ENCODE measurements at regions of chr2 and their contacts with region 1.

Region 1: GRCh38 chr2:105369747-105370690 is 28.8 kb downstream of the FHL2 start:
- DNase-seq: peak; percentile 55 to 74 (median 74)
- H3K4me3 ChIP-seq: no peak overlapping the region
- H3K4me3 Mint-ChIP-seq: no peak overlapping the region
- H3K27ac ChIP-seq: no peak overlapping the region
- H3K27ac Mint-ChIP-seq: no peak overlapping the region
- H3K4me1 ChIP-seq: peaks cover 0 to 6% of the 10 kb centered on the region in 2 donors
- H3K4me1 Mint-ChIP-seq: peaks cover 4% of the 10 kb centered on the region
- H3K27me3 ChIP-seq: no peaks in the 10 kb centered on the region
- H3K27me3 Mint-ChIP-seq: peaks cover 5 to 10% (median 7%) of the 10 kb centered on the region in 3 donors
- CTCF ChIP-seq: peak; percentile 88

Region 2: GRCh38 chr2:105102963-105103421 is 267.0 kb before region 1 on chr2:
- intact Hi-C with region 1: no loop called
- DNase-seq: no peak
- H3K4me3 ChIP-seq: no peak overlapping the region
- H3K4me3 Mint-ChIP-seq: no peak overlapping the region
- H3K27ac ChIP-seq: no peak overlapping the region
- H3K27ac Mint-ChIP-seq: peak overlapping the region in 1 of 7 donors; percentile 17
- H3K4me1 ChIP-seq: peaks cover 14 to 22% of the 10 kb centered on the region in 2 donors
- H3K4me1 Mint-ChIP-seq: peaks cover 27% of the 10 kb centered on the region
- H3K27me3 ChIP-seq: no peaks in the 10 kb centered on the region
- H3K27me3 Mint-ChIP-seq: peaks cover 0 to 2% (median 0%) of the 10 kb centered on the region in 3 donors
- CTCF ChIP-seq: no peak

Region 3: GRCh38 chr2:105261061-105261460 is 109.0 kb before region 1 on chr2:
- intact Hi-C with region 1: no loop called
- DNase-seq: no peak
- H3K4me3 ChIP-seq: no peak overlapping the region
- H3K4me3 Mint-ChIP-seq: no peak overlapping the region
- H3K27ac ChIP-seq: no peak overlapping the region
- H3K27ac Mint-ChIP-seq: peak overlapping the region in 1 of 7 donors; percentile 13
- H3K4me1 ChIP-seq: peaks cover 0 to 7% of the 10 kb centered on the region in 2 donors
- H3K4me1 Mint-ChIP-seq: peaks cover 15% of the 10 kb centered on the region
- H3K27me3 ChIP-seq: no peaks in the 10 kb centered on the region
- H3K27me3 Mint-ChIP-seq: peaks cover 0 to 1% (median 0%) of the 10 kb centered on the region in 3 donors
- CTCF ChIP-seq: no peak

Region 4: GRCh38 chr2:105521205-105521604 is 151.2 kb after region 1 on chr2:
- intact Hi-C with region 1: loop called (anchors 2 to 10 kb)
- DNase-seq: no peak
- H3K4me3 ChIP-seq: no peak overlapping the region
- H3K4me3 Mint-ChIP-seq: no peak overlapping the region
- H3K27ac ChIP-seq: no peak overlapping the region
- H3K27ac Mint-ChIP-seq: no peak overlapping the region
- H3K4me1 ChIP-seq: no peaks in the 10 kb centered on the region
- H3K4me1 Mint-ChIP-seq: peaks cover 7% of the 10 kb centered on the region
- H3K27me3 ChIP-seq: no peaks in the 10 kb centered on the region
- H3K27me3 Mint-ChIP-seq: peaks cover 0 to 2% (median 0%) of the 10 kb centered on the region in 3 donors
- CTCF ChIP-seq: peak; percentile 63

Region 5: DNA sequence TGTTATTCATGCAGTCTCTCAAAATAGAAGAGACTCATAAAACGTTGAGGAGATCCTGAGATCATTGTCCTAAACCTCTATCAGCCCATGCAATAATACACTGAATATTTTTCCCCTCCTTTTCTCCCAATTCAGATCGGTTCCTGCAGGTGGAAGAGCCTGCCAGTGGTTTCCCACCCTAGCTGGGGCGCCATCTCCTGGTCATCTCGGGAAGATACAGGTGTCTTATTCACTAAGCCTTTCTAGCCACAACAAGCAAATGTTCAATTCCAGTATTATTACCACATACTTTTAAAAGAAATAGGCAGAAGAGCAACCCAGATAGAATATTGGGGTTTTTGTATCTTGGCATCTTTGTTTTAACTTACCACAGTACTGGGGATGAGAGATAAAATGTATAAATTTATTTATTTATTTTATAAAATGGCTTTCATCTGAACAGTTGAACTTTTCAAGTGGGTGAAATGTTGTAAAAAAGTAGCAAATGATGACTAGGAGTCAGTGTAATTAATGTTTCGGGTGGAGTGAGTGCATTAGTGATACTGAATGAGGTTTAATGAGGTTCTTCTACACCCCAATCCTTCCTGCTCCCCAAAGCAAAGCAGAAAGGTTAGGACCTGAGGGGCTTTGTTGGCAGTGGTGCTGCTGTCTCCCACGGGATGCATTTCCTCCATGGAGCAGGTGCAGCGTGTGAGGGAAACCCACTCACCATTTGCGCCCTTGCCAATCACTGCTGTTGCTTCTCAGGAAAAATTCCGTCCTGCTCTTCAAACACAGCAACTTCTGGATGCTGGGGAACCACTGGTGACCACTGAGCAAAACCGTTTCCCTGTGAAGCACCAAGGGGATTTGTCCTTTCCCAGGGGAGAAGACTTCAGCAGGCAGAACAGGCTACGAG is 176.0 kb after region 1 on chr2:
- intact Hi-C with region 1: loop called in 1 of 2 experiments (anchors 10 kb)
- DNase-seq: peak; percentile 4 to 36 (median 30)
- H3K4me3 ChIP-seq: no peak overlapping the region
- H3K4me3 Mint-ChIP-seq: peak overlapping the region in 1 of 2 donors; percentile 18
- H3K27ac ChIP-seq: no peak overlapping the region
- H3K27ac Mint-ChIP-seq: no peak overlapping the region
- H3K4me1 ChIP-seq: no peaks in the 10 kb centered on the region
- H3K4me1 Mint-ChIP-seq: peaks cover 2% of the 10 kb centered on the region
- H3K27me3 ChIP-seq: no peaks in the 10 kb centered on the region
- H3K27me3 Mint-ChIP-seq: peaks cover 0 to 4% (median 2%) of the 10 kb centered on the region in 3 donors
- CTCF ChIP-seq: peak; percentile 85

Region 6: DNA sequence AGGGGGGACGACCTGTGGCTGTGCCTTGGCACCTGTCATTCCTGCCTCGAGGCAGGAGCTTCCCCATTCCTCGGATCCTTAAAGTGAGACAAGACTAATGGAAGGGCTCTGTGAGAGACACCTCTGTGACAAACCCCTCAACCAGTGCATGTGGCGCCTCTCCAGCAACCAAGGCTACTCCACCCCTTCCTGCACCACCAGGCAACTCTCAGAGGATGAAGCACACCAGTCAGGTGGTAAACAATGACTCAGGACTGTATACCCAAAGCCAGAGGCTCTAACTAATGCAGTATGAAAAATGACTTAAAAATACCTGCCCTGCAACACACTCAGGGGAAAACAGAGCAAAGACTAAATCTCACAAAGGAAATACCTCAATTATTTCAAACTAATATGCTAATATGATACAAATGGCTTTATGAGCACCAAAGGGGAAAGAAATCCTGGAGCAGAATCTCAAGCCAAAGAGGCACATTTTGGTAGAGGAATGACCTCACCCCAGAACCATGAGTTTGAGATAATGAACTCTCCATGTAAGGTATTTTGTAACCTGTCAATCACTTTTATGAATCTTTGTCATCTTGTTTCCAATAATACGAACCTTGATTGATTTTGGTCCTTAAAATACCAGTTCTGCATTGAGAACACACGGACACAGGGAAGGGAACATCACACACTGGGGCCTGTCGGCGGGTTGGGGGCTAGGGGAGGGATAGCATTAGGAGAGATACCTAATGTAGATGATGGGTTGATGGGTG is 687.4 kb after region 1 on chr2:
- intact Hi-C with region 1: no loop called
- DNase-seq: no peak
- H3K4me3 ChIP-seq: no peak overlapping the region
- H3K4me3 Mint-ChIP-seq: no peak overlapping the region
- H3K27ac ChIP-seq: no peak overlapping the region
- H3K27ac Mint-ChIP-seq: peak overlapping the region in 1 of 7 donors; percentile 16
- H3K4me1 ChIP-seq: no peaks in the 10 kb centered on the region
- H3K4me1 Mint-ChIP-seq: no peaks in the 10 kb centered on the region
- H3K27me3 ChIP-seq: no peaks in the 10 kb centered on the region
- H3K27me3 Mint-ChIP-seq: peaks cover 0 to 4% (median 2%) of the 10 kb centered on the region in 3 donors
- CTCF ChIP-seq: no peak

Region 7: GRCh38 chr2:106582148-106583143 is 1212.4 kb after region 1 on chr2:
- intact Hi-C with region 1: loop called in 1 of 2 experiments (anchors 10 kb)
- DNase-seq: peak; percentile 50 to 66 (median 60)
- H3K4me3 ChIP-seq: peak overlapping the region; percentile 24 to 70 (median 46)
- H3K4me3 Mint-ChIP-seq: peak overlapping the region; percentile 84 to 96
- H3K27ac ChIP-seq: no peak overlapping the region
- H3K27ac Mint-ChIP-seq: peak overlapping the region in 3 of 7 donors; percentile 37 to 78 (median 59)
- H3K4me1 ChIP-seq: peaks cover 8 to 10% of the 10 kb centered on the region in 2 donors
- H3K4me1 Mint-ChIP-seq: peaks cover 19% of the 10 kb centered on the region
- H3K27me3 ChIP-seq: peaks cover 6 to 14% of the 10 kb centered on the region in 2 donors
- H3K27me3 Mint-ChIP-seq: peaks cover 17 to 37% (median 31%) of the 10 kb centered on the region in 3 donors
- CTCF ChIP-seq: peak; percentile 90

Measured in CD14-positive monocyte (primary cell).